AG04449 (cell line): ENCODE measurements at regions of chr17 and their contacts with region 1.

Region 1: DNA sequence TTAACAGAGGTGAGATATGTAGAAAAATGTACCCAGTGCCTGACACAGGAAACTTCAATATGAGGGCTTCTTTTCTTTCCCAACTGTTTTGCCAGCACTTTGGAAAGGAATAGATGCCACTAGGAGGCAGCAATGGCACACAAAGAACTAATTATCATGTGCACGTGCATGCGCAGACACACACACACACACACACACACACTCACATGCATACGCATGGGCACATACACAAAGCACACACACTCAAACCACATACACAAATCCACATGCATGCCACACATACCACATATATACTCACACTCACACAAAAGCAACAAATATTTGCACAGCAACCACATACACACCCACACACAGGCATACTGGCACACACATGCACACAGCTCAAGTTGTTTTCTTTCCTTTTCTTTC is 8.8 kb upstream of the CEP112 start:
- DNase-seq: peak; percentile 14
- H3K4me3 ChIP-seq: no peak overlapping the region
- CTCF ChIP-seq: peak; percentile 54

Region 2: DNA sequence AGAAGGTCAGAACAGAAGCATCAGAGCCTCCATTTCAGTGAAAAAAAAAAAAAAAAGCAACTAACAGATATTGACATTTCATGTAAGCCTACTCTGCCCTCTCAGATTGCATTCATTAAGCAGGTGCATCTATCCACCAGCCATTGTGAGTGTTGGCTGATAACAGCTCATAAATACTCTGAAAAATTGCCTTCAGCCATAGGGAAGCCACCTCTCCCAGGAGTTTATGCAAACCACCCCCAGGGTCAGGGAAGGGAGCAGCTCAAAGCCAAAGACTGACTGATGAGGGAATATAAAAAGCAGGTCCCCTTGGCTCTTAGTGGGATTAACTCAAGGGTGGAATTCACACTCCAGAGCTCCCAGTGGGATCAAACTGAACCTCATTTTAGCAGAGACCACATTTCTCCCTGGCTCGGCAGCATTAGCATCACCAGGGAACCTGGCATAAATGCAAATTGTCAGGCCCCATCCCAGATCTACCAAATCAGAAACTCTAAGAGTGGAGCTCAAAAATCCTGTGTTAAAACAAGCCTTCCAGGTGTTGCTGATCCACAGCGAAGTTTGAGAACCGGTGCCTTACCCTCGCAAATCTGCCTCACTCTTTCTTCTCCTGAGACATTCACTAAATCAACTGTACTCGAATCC is 14.3 kb after region 1 on chr17:
- CTCF ChIA-PET with region 1: interaction called, 35 read pairs
- POLR2A ChIA-PET with region 1: no interaction called
- DNase-seq: no peak
- H3K4me3 ChIP-seq: no peak overlapping the region
- CTCF ChIP-seq: no peak

Region 3: GRCh38 chr17:66673668-66674315 is 473.1 kb after region 1 on chr17:
- CTCF ChIA-PET with region 1: interaction called, 10 read pairs
- POLR2A ChIA-PET with region 1: no interaction called
- DNase-seq: peak; percentile 14
- H3K4me3 ChIP-seq: no peak overlapping the region
- CTCF ChIP-seq: peak; percentile 63